OCI-LY7 (cell line): ENCODE measurements at regions of chr9 and their contacts with region 1.

Region 1: GRCh38 chr9:31321686-31322085 is 1062.8 kb upstream of the ACO1 start:
- DNase-seq: no peak
- H3K4me3 ChIP-seq: no peak overlapping the region
- H3K27ac ChIP-seq: no peak overlapping the region
- H3K4me1 ChIP-seq: peaks cover 12% of the 10 kb centered on the region
- CTCF ChIP-seq: no peak

Region 2: DNA sequence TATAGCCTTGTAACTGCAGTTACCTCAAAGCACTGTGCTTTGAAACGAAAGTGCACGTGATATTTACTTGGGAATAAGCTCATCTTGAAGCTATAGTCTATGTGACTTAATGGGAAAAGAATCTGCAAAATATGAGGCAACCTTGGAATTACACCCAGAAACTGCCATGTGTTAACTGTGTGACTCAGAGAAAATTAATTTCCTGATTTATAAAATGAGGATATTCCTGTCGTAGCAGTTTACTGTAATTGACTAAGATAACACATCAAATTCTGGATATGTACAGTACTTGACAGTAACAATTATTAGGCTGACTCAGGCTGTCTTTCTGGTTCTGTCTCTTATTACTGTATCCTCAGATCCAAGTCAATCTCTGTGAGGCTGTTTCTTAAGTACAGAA is 17.1 kb before region 1 on chr9:
- CTCF ChIA-PET with region 1: no interaction called
- POLR2A ChIA-PET with region 1: no interaction called
- intact Hi-C with region 1: loop called (anchors 1 kb)
- DNase-seq: no peak
- H3K4me3 ChIP-seq: no peak overlapping the region
- H3K27ac ChIP-seq: no peak overlapping the region
- H3K4me1 ChIP-seq: no peaks in the 10 kb centered on the region
- CTCF ChIP-seq: no peak

Region 3: GRCh38 chr9:31799953-31800609 is 478.4 kb after region 1 on chr9:
- CTCF ChIA-PET with region 1: no interaction called
- POLR2A ChIA-PET with region 1: no interaction called
- intact Hi-C with region 1: no loop called
- DNase-seq: peak; percentile 14
- H3K4me3 ChIP-seq: no peak overlapping the region
- H3K27ac ChIP-seq: no peak overlapping the region
- H3K4me1 ChIP-seq: no peaks in the 10 kb centered on the region
- CTCF ChIP-seq: peak; percentile 78